ENCODE measurements at regions of chr17 and their contacts with region 1.

Region 1: DNA sequence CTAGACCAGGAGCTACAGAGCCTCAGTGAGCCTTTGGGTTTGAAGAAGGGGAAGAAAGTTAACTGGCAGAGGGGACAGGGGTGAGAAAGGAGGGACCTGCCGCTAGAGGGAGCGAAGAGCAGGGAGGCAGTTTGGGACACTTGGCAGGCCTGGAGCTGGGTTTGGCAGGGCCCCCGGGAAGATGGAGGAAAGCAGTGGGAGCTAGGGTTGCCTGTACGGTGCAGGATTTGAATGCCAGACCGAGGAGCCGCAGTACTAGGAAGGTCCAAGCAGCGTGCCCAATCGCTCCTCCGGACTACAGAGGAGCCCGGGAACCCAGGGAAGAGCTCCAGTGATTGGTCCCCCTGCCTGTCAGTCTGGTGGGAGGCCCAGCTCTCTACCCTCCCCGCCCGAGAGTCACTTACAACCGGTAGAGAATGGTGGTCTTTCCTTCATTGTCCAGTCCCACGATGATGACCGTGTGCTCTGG is 1.3 kb downstream of the ARL5C start:
- DNase-seq: peak; percentile 85
- H3K4me3 Mint-ChIP-seq: peak overlapping the region; percentile 79
- H3K27ac Mint-ChIP-seq: no peak overlapping the region
- H3K4me1 Mint-ChIP-seq: peaks cover 40% of the 10 kb centered on the region
- H3K27me3 Mint-ChIP-seq: peaks cover 83% of the 10 kb centered on the region

Region 2: DNA sequence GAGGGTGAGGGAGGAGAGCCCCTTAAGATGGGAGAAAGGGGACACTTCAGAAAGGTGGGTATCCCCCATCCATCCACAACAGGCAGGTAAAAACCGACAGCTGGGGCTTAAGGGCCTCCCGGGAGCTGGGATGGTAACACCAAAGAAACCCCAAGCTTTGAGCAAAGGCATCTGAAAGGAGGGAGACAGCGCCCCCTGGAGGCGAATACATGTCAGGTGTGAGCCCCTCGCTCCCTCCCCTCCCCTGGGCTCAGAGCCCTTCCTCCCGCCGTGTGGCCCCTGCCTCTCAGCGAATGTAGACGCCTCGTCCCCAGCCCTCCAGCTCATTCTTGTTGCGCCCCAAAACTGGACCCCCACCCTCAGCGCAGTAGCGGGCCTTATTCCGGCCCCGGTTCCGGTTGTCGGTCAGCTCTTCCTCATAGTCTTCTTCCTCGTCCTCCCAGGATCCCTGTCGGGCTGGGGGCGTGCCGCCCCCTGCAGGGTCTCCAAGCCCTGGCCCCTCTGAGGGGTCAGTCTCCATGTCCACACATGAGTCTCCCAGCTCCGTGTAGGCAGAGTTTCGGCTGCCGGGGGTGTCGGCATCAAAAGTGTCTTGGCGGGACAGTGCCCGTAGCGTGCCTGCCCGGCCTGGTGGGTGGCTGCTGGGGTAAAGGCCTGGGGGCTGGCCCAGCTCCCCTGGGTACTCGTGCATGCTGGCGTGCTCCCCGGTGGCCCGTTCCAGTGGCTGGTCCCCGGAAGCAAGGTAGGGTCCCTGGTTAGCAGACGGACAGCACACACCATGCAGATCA is 10.4 kb after region 1 on chr17:
- CTCF ChIA-PET with region 1: interaction called, 121 read pairs
- DNase-seq: peak; percentile 86
- H3K4me3 Mint-ChIP-seq: no peak overlapping the region
- H3K27ac Mint-ChIP-seq: peak overlapping the region; percentile 37
- H3K4me1 Mint-ChIP-seq: peaks cover 26% of the 10 kb centered on the region
- H3K27me3 Mint-ChIP-seq: peaks cover 19% of the 10 kb centered on the region

Region 3: DNA sequence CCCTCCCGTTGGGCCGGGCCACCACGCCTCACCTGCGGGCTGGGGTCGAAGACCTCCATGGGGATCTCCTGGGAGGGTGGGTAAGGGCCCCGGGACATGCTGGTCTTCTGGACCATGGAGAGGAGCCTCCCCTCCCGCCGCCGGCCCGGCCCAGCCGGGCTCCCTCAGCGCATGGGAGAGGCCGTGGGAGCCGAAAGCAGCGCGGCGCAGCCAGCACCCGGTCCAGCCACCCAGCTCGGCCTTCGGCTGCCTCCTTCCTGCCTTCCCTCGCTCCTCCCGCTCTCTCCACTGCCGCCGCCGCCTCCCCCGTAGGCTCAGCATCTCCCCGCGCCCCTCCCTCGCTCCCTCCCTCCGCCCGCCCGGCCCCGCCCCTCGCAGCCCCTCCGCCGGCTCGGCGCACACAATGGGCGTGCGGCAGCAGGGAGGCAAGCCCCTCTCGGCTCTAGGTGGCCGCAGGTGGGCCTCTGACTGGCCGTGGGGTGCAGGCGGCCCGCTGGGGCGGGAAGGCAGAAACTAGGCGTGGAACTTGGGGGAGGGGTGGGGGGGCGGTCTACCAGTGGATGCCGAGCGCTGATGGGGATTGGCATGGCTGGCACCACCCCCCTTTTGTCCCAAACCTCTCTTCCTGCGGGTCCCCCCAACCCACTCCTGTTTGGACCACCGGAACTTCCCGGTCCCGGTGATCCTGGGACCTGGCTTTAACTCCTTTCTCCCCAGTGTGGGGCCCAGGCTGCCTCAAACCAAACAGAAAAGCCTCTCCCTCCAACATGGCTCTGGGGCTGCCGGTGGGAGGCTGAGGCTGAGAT is 32.9 kb after region 1 on chr17 and contains the start of gene CACNB1:
- CTCF ChIA-PET with region 1: interaction called, 13 read pairs
- DNase-seq: peak; percentile 85
- H3K4me3 Mint-ChIP-seq: peak within 1 kb of the TSS; percentile 94
- H3K27ac Mint-ChIP-seq: peak within 1 kb of the TSS; percentile 97
- H3K4me1 Mint-ChIP-seq: peaks cover 68% of the 10 kb centered on the region
- H3K27me3 Mint-ChIP-seq: no peaks in the 10 kb centered on the region

Region 4: GRCh38 chr17:39209317-39210092 is 44.8 kb after region 1 on chr17:
- CTCF ChIA-PET with region 1: interaction called, 10 read pairs
- DNase-seq: peak; percentile 80
- H3K4me3 Mint-ChIP-seq: peak overlapping the region; percentile 45
- H3K27ac Mint-ChIP-seq: no peak overlapping the region
- H3K4me1 Mint-ChIP-seq: peaks cover 31% of the 10 kb centered on the region
- H3K27me3 Mint-ChIP-seq: peaks cover 69% of the 10 kb centered on the region

Region 5: GRCh38 chr17:39235555-39236449 is 71.1 kb after region 1 on chr17:
- CTCF ChIA-PET with region 1: interaction called, 12 read pairs
- DNase-seq: peak; percentile 74
- H3K4me3 Mint-ChIP-seq: no peak overlapping the region
- H3K27ac Mint-ChIP-seq: no peak overlapping the region
- H3K4me1 Mint-ChIP-seq: peaks cover 28% of the 10 kb centered on the region
- H3K27me3 Mint-ChIP-seq: peaks cover 53% of the 10 kb centered on the region

Region 6: DNA sequence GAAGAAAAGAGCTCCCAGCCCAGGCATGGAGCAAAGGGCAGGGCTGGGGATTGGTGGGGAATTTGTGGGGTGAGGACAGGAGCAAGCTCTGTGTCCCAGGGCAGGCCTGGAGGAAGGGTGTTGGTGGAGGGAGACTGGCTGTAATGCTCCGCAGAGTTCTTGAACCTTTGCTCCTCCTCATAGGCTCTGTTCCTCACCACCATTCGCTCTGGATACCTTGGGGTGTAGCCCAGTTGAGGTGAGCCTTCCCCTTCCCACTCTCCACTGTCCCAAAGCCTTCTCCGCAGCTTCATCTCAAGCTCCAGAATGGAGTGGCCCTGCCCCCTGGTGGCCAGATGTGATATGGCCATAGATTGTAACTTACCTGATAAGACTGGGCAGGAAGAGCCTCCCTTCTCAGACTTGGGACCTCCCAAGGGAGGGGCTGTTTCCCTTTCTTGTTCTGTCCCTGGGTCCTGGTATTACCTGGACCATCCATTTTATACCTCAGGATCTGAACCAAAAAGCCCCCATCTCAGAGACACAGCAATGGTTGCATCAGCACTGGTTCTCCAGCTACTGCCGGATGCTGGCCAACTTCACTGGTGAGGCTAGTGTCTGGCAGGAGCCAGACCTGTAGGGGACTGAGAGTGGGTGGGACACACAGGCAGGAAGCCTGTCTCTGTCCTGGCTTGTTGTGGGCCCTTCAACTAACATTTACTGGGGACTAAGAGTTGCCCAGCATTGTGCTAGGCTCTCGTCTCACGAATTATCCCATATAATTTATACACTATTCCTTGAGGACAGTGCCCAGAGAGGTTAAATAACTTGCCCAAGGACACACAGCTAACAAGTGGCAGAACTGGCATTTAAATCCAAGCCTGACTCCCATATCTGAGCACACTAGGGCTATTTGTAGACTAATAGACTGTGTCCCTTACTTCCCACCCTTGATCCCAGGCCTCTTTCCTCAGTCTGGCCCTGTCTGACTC is 80.2 kb after region 1 on chr17:
- CTCF ChIA-PET with region 1: interaction called, 10 read pairs
- DNase-seq: peak; percentile 92
- H3K4me3 Mint-ChIP-seq: no peak overlapping the region
- H3K27ac Mint-ChIP-seq: peak overlapping the region; percentile 46
- H3K4me1 Mint-ChIP-seq: peaks cover 14% of the 10 kb centered on the region
- H3K27me3 Mint-ChIP-seq: peaks cover 17% of the 10 kb centered on the region

Region 7: GRCh38 chr17:39281806-39282205 is 117.1 kb after region 1 on chr17:
- CTCF ChIA-PET with region 1: no interaction called
- DNase-seq: no peak
- H3K4me3 Mint-ChIP-seq: no peak overlapping the region
- H3K27ac Mint-ChIP-seq: no peak overlapping the region
- H3K4me1 Mint-ChIP-seq: no peaks in the 10 kb centered on the region
- H3K27me3 Mint-ChIP-seq: no peaks in the 10 kb centered on the region

Measured in activated naive CD4-positive, alpha-beta T cell treated with anti-CD3 and anti-CD28 coated beads, Interleukin-2, amount 10 ng/mL, durations not matched to agents 7 days and 5 days (primary cell).